Caco-2 (cell line): ENCODE measurements at regions of chr9 and their contacts with region 1.

Region 1: DNA sequence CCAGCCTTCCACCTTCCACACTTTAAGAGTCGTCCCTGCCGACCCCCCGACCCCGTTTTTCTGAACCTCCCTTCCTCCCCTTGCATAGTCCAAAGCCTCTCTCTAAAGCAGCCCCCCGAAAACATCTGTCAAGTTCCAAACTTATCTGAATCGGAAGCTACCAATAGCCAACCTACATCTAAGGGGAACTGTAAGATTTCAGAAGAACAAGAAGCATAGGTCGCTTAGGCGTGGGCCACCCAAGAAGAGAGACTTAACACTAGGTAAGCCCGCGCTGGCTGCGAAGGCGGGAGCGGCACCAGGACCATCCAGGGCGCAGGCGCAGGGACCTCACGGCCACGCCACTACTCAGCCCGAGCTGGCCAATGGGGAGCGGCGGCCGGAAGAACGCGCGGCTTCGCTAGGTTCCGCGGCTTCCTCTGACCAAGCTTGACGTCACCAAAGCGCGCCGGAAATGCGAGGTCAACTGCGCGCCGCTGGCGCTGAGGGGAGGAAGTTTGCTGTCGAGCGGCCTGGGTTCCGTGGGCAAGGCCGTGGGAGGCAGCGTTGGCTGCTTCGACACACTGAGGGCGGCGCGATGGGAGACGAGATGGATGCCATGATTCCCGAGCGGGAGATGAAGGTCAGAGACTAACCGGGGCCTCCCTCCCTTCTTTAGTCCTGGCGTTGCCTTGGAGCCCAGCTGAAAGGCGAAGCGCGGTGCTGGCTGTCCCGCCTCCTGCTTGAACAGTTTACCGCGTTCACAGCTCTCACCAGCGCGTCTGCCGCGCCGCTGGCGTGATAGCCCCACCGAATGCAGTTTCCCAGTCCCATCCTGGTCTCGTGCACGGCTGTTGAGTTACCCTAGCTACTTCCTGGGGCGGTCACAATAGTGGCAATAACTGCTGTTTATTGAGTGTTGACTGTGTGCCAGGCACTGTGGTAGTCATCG is at the start of gene NUP214:
- DNase-seq: peak; percentile 98
- H3K4me3 ChIP-seq: peak within 1 kb of the TSS; percentile 88
- H3K4me3 Mint-ChIP-seq: peak within 1 kb of the TSS; percentile 99
- H3K27ac Mint-ChIP-seq: peak within 1 kb of the TSS; percentile 100
- H3K4me1 ChIP-seq: no peaks in the 10 kb centered on the region
- H3K4me1 Mint-ChIP-seq: peaks cover 5% of the 10 kb centered on the region
- H3K27me3 ChIP-seq: no peaks in the 10 kb centered on the region
- H3K27me3 Mint-ChIP-seq: no peaks in the 10 kb centered on the region
- CTCF ChIP-seq: no peak
- total RNA-seq, gene NUP214: 52.3 and 52.9 TPM in 2 replicates

Region 2: GRCh38 chr9:131056781-131057506 is 68.4 kb before region 1 on chr9:
- CTCF ChIA-PET with region 1: no interaction called
- POLR2A ChIA-PET with region 1: no interaction called
- intact Hi-C with region 1: loop called (anchors 5 kb)
- DNase-seq: no peak
- H3K4me3 ChIP-seq: no peak overlapping the region
- H3K4me3 Mint-ChIP-seq: no peak overlapping the region
- H3K27ac Mint-ChIP-seq: no peak overlapping the region
- H3K4me1 ChIP-seq: no peaks in the 10 kb centered on the region
- H3K4me1 Mint-ChIP-seq: no peaks in the 10 kb centered on the region
- H3K27me3 ChIP-seq: no peaks in the 10 kb centered on the region
- H3K27me3 Mint-ChIP-seq: no peaks in the 10 kb centered on the region
- CTCF ChIP-seq: no peak

Region 3: GRCh38 chr9:131112384-131113154 is 12.8 kb before region 1 on chr9:
- CTCF ChIA-PET with region 1: no interaction called
- POLR2A ChIA-PET with region 1: interaction called, 14 read pairs
- intact Hi-C with region 1: no loop called
- DNase-seq: no peak
- H3K4me3 ChIP-seq: no peak overlapping the region
- H3K4me3 Mint-ChIP-seq: no peak overlapping the region
- H3K27ac Mint-ChIP-seq: peak overlapping the region; percentile 82
- H3K4me1 ChIP-seq: peaks cover 4% of the 10 kb centered on the region; the same call in 1 of the 2 replicates
- H3K4me1 Mint-ChIP-seq: no peaks in the 10 kb centered on the region
- H3K27me3 ChIP-seq: no peaks in the 10 kb centered on the region
- H3K27me3 Mint-ChIP-seq: no peaks in the 10 kb centered on the region
- CTCF ChIP-seq: no peak